Right cardiac atrium (tissue), 5 donors: ENCODE measurements at regions of chr19 and their contacts with region 1.

Region 1: GRCh38 chr19:33406521-33407139 is 33.1 kb downstream of the CEBPG start:
- DNase-seq: peak; percentile 70 to 91 (median 88)
- ATAC-seq: peak; percentile 56 to 73
- H3K4me3 ChIP-seq: no peak overlapping the region
- H3K27ac ChIP-seq: no peak overlapping the region
- H3K4me1 ChIP-seq: no peaks in the 10 kb centered on the region
- H3K27me3 ChIP-seq: no peaks in the 10 kb centered on the region

Region 2: GRCh38 chr19:33235269-33235995 is 171.2 kb before region 1 on chr19:
- intact Hi-C with region 1: loop called in 3 of 4 experiments (anchors 2 to 5 kb)
- DNase-seq: peak; percentile 76 to 93 (median 91)
- ATAC-seq: peak; percentile 62 to 71
- H3K4me3 ChIP-seq: no peak overlapping the region
- H3K27ac ChIP-seq: no peak overlapping the region
- H3K4me1 ChIP-seq: no peaks in the 10 kb centered on the region
- H3K27me3 ChIP-seq: no peaks in the 10 kb centered on the region

Region 3: DNA sequence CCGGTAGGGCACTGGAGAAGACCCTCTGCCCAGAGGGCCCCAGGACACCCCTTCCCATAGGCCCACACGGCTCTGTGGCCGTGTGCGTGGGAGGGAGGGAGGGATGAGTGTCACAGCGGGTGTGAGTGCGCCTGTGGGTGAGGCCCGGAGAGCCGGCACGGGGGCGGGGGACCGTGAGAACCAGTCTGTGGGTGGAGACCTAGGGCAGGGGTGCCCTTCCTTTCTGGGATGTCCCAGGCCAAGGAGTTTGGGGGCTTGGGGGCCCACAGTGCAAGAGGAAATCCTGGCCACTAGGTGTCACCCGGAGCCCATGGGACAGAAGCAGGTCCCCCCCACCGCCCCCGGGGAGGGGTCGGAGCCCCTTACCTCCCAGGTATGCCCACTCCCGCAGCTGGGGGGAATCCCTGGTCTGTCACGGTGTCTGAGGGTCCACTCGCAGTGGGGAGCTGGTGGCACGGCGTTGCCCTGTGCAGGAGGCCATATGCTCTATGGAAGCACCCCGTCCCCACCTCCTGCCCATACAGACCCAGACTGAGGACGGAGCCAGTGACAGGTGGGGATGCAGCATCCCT is 165.0 kb before region 1 on chr19:
- intact Hi-C with region 1: loop called (anchors 2 to 5 kb)
- DNase-seq: peak in 2 of 3 donors; percentile 60 to 66
- ATAC-seq: peak; percentile 56 to 62
- H3K4me3 ChIP-seq: no peak overlapping the region
- H3K27ac ChIP-seq: no peak overlapping the region
- H3K4me1 ChIP-seq: no peaks in the 10 kb centered on the region
- H3K27me3 ChIP-seq: no peaks in the 10 kb centered on the region

Region 4: GRCh38 chr19:33473653-33474305 is 67.1 kb after region 1 on chr19:
- intact Hi-C with region 1: no loop called
- DNase-seq: no peak
- ATAC-seq: no peak
- H3K4me3 ChIP-seq: no peak overlapping the region
- H3K27ac ChIP-seq: no peak overlapping the region
- H3K4me1 ChIP-seq: no peaks in the 10 kb centered on the region
- H3K27me3 ChIP-seq: no peaks in the 10 kb centered on the region